WTC11 (cell line): ENCODE measurements at regions of chr20 and their contacts with region 1.

Region 1: DNA sequence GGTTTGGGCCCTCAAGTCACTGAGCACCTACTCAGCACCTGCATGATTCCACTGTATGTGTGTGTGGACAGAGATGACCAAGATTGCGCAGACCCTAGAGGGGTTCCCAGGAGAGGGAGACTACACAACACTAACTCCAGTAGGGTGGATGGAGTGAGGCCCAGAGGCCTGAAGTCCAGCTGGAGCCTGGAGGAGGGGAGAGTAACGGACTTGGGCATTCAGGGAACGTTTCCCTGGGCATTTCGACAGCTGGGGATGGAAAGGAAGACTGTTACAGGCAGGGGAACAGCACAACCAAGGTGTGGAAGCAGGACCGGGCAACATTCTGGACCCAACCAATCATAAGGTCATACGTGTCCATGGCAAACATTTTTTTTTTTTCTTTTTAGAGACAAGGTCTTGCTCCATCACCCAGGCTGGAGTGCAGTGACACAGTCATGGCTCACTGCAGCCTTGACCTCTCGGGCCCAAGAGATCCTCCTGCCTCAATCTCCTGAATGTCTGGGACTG is 11.1 kb upstream of the CEBPB start:
- DNase-seq: no peak
- ATAC-seq: peak; percentile 53
- H3K4me3 Mint-ChIP-seq: no peak overlapping the region
- H3K27ac Mint-ChIP-seq: peak overlapping the region; percentile 95
- H3K4me1 Mint-ChIP-seq: 0 out of 2 replicates have a peak, but pooled peaks cover 3% of the 10 kb centered on the region
- H3K27me3 Mint-ChIP-seq: peaks cover 4% of the 10 kb centered on the region; the same call in 1 of the 2 replicates
- CTCF ChIP-seq: peak; percentile 34

Region 2: DNA sequence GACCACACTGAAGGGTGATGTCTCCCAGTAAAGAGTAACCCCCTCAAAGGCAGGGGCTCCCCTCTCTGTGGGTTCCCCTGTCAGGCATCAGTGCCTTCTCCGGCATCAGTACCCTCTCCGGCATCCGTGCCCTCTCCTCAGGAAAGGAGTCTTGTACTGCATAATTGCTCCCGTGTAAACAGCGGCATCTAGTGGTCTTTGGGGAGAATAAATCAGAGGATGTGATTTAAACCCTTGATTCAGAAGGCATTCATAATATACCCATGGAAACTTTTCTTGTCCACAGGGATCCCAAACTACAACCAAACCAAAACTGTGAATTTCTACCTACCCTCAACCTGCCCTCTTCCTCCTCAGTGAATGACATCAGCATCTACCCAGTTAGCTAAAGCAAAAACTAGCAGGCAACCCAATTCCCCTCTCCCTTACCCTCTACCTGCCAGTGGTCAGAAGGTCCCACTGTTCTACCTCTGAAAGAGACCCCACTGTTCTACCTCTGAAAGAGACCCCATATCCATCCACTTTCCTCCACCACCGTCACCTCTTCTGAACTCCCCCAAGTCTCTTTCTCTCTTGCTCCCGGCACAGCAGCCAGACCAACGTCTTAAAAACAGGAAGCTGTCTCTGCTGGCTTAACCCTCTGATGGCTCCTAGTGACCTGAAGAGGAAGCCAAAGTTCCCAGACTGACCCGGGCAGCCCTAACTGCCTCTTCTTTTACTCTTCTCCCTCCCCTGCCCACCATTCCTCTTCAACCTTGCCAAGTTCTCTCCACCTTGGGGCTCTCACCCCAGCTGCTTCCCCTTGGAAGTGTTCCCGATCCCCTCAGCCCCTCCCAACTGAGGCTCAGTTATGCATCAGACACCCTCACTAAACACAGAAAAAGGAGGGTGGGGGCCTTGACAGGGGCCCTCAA is 93.9 kb before region 1 on chr20:
- CTCF ChIA-PET with region 1: interaction called, 12 read pairs
- POLR2A ChIA-PET with region 1: no interaction called
- DNase-seq: peak; percentile 50
- ATAC-seq: peak; percentile 90
- H3K4me3 Mint-ChIP-seq: peak overlapping the region; percentile 31
- H3K27ac Mint-ChIP-seq: peak overlapping the region; percentile 87
- H3K4me1 Mint-ChIP-seq: peaks cover 27% of the 10 kb centered on the region
- H3K27me3 Mint-ChIP-seq: no peaks in the 10 kb centered on the region
- CTCF ChIP-seq: peak; percentile 62

Region 3: GRCh38 chr20:50120897-50121693 is 58.5 kb before region 1 on chr20:
- CTCF ChIA-PET with region 1: interaction called, 101 read pairs
- POLR2A ChIA-PET with region 1: interaction called, 4 read pairs
- DNase-seq: peak; percentile 70
- ATAC-seq: peak; percentile 86
- H3K4me3 Mint-ChIP-seq: no peak overlapping the region
- H3K27ac Mint-ChIP-seq: peak overlapping the region; percentile 57; the same call in 1 of the 2 replicates
- H3K4me1 Mint-ChIP-seq: peaks cover 6% of the 10 kb centered on the region
- H3K27me3 Mint-ChIP-seq: 0 out of 2 replicates have a peak, but pooled peaks cover 2% of the 10 kb centered on the region
- CTCF ChIP-seq: peak; percentile 47

Region 4: GRCh38 chr20:50153485-50154377 is 25.8 kb before region 1 on chr20 and contains the start of gene PEDS1:
- CTCF ChIA-PET with region 1: interaction called, 37 read pairs
- POLR2A ChIA-PET with region 1: interaction called, 4 read pairs
- DNase-seq: peak; percentile 88
- ATAC-seq: peak; percentile 91
- H3K4me3 Mint-ChIP-seq: peak within 1 kb of the TSS; percentile 83
- H3K27ac Mint-ChIP-seq: peak within 1 kb of the TSS; percentile 89
- H3K4me1 Mint-ChIP-seq: peaks cover 41% of the 10 kb centered on the region
- H3K27me3 Mint-ChIP-seq: peaks cover 15% of the 10 kb centered on the region
- CTCF ChIP-seq: no peak
- total RNA-seq, gene PEDS1: 35.0 to 36.7 TPM (median 35.6 TPM) in 3 replicates

Region 5: GRCh38 chr20:50189681-50190582 is 10.4 kb after region 1 on chr20:
- CTCF ChIA-PET with region 1: interaction called, 16 read pairs
- POLR2A ChIA-PET with region 1: no interaction called
- DNase-seq: peak; percentile 96
- ATAC-seq: peak; percentile 75
- H3K4me3 Mint-ChIP-seq: peak overlapping the region; percentile 57
- H3K27ac Mint-ChIP-seq: no peak overlapping the region
- H3K4me1 Mint-ChIP-seq: peaks cover 46% of the 10 kb centered on the region
- H3K27me3 Mint-ChIP-seq: peaks cover 11% of the 10 kb centered on the region
- CTCF ChIP-seq: peak; percentile 72

Region 6: GRCh38 chr20:50242853-50243609 is 63.5 kb after region 1 on chr20:
- CTCF ChIA-PET with region 1: no interaction called
- POLR2A ChIA-PET with region 1: no interaction called
- DNase-seq: no peak
- ATAC-seq: no peak
- H3K4me3 Mint-ChIP-seq: no peak overlapping the region
- H3K27ac Mint-ChIP-seq: no peak overlapping the region
- H3K4me1 Mint-ChIP-seq: no peaks in the 10 kb centered on the region
- H3K27me3 Mint-ChIP-seq: no peaks in the 10 kb centered on the region
- CTCF ChIP-seq: no peak